Calu3 (cell line): ENCODE measurements at regions of chr21 and their contacts with region 1.

Region 1: DNA sequence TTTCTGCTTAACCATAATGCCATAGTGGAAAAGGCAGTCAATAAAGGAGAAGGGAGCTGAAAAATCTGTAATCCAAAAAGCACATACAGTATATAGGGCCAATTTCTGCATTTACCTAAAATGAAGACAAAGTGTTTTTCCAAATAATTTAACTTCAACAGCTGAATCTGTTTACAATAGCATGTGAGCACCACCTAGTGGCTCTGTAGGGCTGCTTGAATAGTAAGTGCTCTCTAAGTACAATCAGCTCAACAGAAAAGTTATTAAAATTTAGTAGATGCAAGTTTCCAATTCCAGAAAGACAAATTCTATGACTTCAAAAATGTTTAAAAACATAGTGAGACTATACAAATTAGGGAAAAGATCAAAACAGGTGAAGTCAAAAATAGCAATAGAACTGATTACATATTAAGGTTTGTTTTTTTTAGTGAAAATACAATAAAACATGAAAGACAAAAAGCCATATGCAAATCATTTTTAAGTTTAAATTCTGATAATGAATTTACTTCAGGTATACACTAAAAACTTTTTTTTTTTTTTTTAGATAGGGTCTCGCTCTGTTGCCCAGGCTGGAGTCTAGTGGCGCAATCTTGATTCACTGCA is 220.0 kb downstream of the SETD4 start:
- DNase-seq: peak; percentile 56
- H3K4me3 Mint-ChIP-seq: no peak overlapping the region
- H3K27ac Mint-ChIP-seq: no peak overlapping the region
- H3K4me1 Mint-ChIP-seq: no peaks in the 10 kb centered on the region
- H3K27me3 Mint-ChIP-seq: peaks cover 4% of the 10 kb centered on the region
- CTCF ChIP-seq: peak; percentile 65

Region 2: GRCh38 chr21:35674895-35675470 is 165.3 kb before region 1 on chr21:
- CTCF ChIA-PET with region 1: interaction called, 11 read pairs
- intact Hi-C with region 1: loop called (anchors 5 kb)
- DNase-seq: peak; percentile 25
- H3K4me3 Mint-ChIP-seq: no peak overlapping the region
- H3K27ac Mint-ChIP-seq: no peak overlapping the region
- H3K4me1 Mint-ChIP-seq: peaks cover 13% of the 10 kb centered on the region
- H3K27me3 Mint-ChIP-seq: peaks cover 18% of the 10 kb centered on the region
- CTCF ChIP-seq: no peak

Region 3: GRCh38 chr21:36297921-36298594 is 457.8 kb after region 1 on chr21:
- CTCF ChIA-PET with region 1: no interaction called
- intact Hi-C with region 1: no loop called
- DNase-seq: peak; percentile 49
- H3K4me3 Mint-ChIP-seq: peak overlapping the region; percentile 54
- H3K27ac Mint-ChIP-seq: peak overlapping the region; percentile 69
- H3K4me1 Mint-ChIP-seq: peaks cover 32% of the 10 kb centered on the region
- H3K27me3 Mint-ChIP-seq: no peaks in the 10 kb centered on the region
- CTCF ChIP-seq: no peak